ENCODE measurements at regions of chr3 and their contacts with region 1.

Region 1: DNA sequence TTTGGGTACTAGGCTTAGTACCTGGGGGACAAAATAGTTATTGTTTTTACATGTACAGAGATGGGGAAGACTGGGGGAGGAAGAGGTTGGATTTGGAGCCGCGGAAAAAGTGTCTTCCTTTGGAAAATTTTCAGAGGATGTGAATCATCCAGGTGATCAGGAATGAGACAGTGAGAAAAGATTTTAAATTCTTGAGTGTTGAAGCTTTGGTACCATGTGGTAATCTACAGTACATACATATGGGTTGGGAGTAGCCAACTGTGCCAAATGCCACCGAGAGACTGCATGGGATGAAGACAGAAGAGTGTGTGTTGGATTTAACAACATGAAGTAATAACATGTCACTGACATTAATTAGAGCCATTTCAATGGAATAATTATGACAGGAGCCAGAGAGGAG is 1238.2 kb downstream of the ROBO1 start:
- DNase-seq: no peak
- ATAC-seq: no peak
- H3K4me3 ChIP-seq: no peak overlapping the region
- H3K27ac ChIP-seq: no peak overlapping the region
- H3K4me1 ChIP-seq: no peaks in the 10 kb centered on the region
- H3K27me3 ChIP-seq: no peaks in the 10 kb centered on the region
- CTCF ChIP-seq: no peak
- EP300 ChIP-seq: no peak
- POLR2A ChIP-seq: no peak
- RAD21 ChIP-seq: no peak

Region 2: GRCh38 chr3:78455712-78456433 is 73.7 kb before region 1 on chr3:
- CTCF ChIA-PET with region 1: no interaction called
- POLR2A ChIA-PET with region 1: no interaction called
- RAD21 ChIA-PET with region 1: no interaction called
- SMC1A ChIA-PET with region 1: no interaction called
- in situ Hi-C with region 1: no loop called
- intact Hi-C with region 1: loop called (anchors 2 kb)
- DNase-seq: no peak
- ATAC-seq: no peak
- H3K4me3 ChIP-seq: no peak overlapping the region
- H3K27ac ChIP-seq: no peak overlapping the region
- H3K4me1 ChIP-seq: no peaks in the 10 kb centered on the region
- H3K27me3 ChIP-seq: no peaks in the 10 kb centered on the region
- CTCF ChIP-seq: no peak
- EP300 ChIP-seq: no peak
- POLR2A ChIP-seq: no peak
- RAD21 ChIP-seq: no peak

Measured in GM12878 (cell line).